Naive thymus-derived CD4-positive, alpha-beta T cell (primary cell): ENCODE measurements at regions of chr12 and their contacts with region 1.

Region 1: DNA sequence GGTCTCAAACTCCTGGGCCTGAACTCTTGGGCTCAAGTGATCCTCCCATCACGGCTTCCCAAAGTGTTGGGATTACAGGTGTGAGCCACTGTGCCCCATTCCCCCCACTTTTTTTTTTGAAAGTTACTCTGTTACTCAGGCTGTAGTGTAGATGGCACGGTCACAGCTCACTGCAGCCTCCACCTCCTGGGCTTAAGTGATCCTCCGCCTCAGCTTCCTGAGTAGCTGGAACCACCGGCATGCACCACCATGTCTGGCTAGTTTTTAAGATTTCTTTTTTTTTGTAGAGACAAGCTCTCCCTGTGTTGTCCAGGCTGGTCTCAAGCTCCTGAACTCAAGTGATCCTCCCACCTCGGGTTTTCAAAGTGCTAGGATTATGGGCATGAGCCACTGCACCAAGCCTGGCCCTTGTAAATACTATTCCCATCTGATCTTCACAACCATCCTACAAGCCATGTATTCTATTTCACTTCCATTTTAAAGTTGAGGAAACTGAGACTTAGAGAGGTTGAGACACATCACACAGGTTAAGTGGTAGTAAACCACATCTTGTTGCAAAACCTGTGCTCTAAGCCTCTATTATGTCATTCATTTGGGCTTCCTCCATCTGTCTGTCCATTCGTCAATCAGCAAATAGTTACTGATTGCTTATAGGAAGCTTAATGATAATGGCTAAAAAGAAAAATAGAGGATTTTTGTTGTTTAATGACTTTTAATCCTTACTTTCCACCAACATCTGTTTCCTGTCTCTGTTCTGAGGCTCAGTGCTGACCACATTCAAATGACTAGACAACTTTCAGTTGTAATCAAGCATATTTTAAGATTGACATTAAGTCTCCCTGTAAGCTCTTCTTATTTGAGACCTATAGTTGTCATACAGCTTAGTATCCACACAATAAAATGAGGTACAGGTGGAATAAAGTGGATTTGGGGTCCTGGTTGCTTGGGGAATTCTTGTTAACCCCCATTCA is 9.2 kb downstream of the ASCL4 start:
- DNase-seq: no peak
- ATAC-seq: no peak
- H3K4me3 ChIP-seq: no peak overlapping the region
- H3K4me3 Mint-ChIP-seq: peak overlapping the region in 1 of 10 donors; percentile 8
- H3K27ac ChIP-seq: no peak overlapping the region
- H3K27ac Mint-ChIP-seq: no peak overlapping the region
- H3K4me1 ChIP-seq: no peaks in the 10 kb centered on the region
- H3K4me1 Mint-ChIP-seq: peaks cover 0 to 12% (median 0%) of the 10 kb centered on the region in 7 donors
- H3K27me3 ChIP-seq: peaks cover 4% of the 10 kb centered on the region in 2 donors
- H3K27me3 Mint-ChIP-seq: peaks cover 10 to 29% (median 27%) of the 10 kb centered on the region in 5 donors

Region 2: DNA sequence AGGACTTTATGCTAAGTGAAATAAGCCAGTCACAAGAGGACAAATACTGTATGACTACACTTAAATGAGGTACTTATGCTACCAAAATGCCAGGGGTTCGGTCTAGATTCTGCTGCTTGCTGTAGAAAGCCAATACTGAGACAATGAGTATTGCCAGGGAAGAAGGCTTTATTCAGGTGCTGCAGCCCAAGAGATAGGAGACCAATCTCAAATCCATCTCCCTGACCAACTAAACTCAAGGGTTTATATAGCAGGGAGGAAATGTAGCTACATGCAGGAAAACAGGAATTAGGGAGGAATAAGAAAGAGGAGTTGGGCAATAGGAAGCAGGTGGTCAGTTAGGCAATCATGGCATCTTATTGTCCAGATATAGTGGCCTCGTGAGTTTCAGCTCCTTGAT is 719.2 kb after region 1 on chr12:
- CTCF ChIA-PET with region 1: no interaction called
- POLR2A ChIA-PET with region 1: no interaction called
- intact Hi-C with region 1: loop called in 1 of 2 experiments (anchors 5 kb)
- DNase-seq: no peak
- ATAC-seq: no peak
- H3K4me3 ChIP-seq: no peak overlapping the region
- H3K4me3 Mint-ChIP-seq: no peak overlapping the region
- H3K27ac ChIP-seq: no peak overlapping the region
- H3K27ac Mint-ChIP-seq: no peak overlapping the region
- H3K4me1 ChIP-seq: no peaks in the 10 kb centered on the region
- H3K4me1 Mint-ChIP-seq: no peaks in the 10 kb centered on the region
- H3K27me3 ChIP-seq: no peaks in the 10 kb centered on the region
- H3K27me3 Mint-ChIP-seq: peaks cover 3 to 48% (median 44%) of the 10 kb centered on the region in 5 donors